ENCODE measurements at regions of chr13 and their contacts with region 1.

Region 1: GRCh38 chr13:50678464-50679162 is 164.9 kb downstream of the DLEU7 start:
- DNase-seq: peak; percentile 71
- H3K4me3 ChIP-seq: no peak overlapping the region
- CTCF ChIP-seq: no peak

Region 2: GRCh38 chr13:50589139-50589538 is 89.5 kb before region 1 on chr13:
- CTCF ChIA-PET with region 1: no interaction called
- POLR2A ChIA-PET with region 1: interaction called, 11 read pairs
- DNase-seq: peak; percentile 83
- H3K4me3 ChIP-seq: no peak overlapping the region
- CTCF ChIP-seq: no peak